Ovary (tissue), 10 donors: ENCODE measurements at regions of chr7 and their contacts with region 1.

Region 1: GRCh38 chr7:142063551-142064442 is 47.7 kb upstream of the MGAM2 start:
- DNase-seq: no peak
- H3K4me3 ChIP-seq: no peak overlapping the region
- H3K27ac ChIP-seq: no peak overlapping the region
- H3K4me1 ChIP-seq: no peaks in the 10 kb centered on the region
- H3K27me3 ChIP-seq: no peaks in the 10 kb centered on the region
- CTCF ChIP-seq: no peak
- EP300 ChIP-seq: no peak
- POLR2A ChIP-seq: no peak

Region 2: GRCh38 chr7:142088022-142088714 is 24.4 kb after region 1 on chr7:
- intact Hi-C with region 1: loop called in 1 of 4 experiments (anchors 1 kb)
- DNase-seq: no peak
- H3K4me3 ChIP-seq: no peak overlapping the region
- H3K27ac ChIP-seq: no peak overlapping the region
- H3K4me1 ChIP-seq: no peaks in the 10 kb centered on the region
- H3K27me3 ChIP-seq: no peaks in the 10 kb centered on the region
- CTCF ChIP-seq: no peak
- EP300 ChIP-seq: no peak
- POLR2A ChIP-seq: no peak

Region 3: DNA sequence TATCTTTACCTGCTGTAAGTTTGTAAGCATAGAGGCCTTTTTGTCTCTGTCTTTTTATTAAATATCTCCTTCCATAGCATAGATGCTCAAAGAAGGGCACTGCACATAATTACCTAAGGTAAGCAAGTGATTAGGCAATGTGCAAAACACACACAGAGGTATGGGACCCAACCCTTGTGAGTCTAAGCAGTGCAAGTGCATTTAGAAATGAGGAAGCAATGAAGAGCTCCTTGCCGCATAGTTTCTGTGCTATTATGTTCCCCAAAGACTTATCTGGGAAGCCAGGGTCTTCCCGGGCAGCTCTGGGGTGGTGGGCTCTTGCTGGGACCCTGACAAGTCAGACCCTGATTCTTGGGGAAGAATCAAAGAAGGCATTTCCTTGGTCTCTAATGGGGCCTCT is 34.2 kb after region 1 on chr7:
- intact Hi-C with region 1: loop called in 2 of 4 experiments (anchors 2 to 5 kb)
- DNase-seq: no peak
- H3K4me3 ChIP-seq: no peak overlapping the region
- H3K27ac ChIP-seq: no peak overlapping the region
- H3K4me1 ChIP-seq: no peaks in the 10 kb centered on the region
- H3K27me3 ChIP-seq: no peaks in the 10 kb centered on the region
- CTCF ChIP-seq: no peak
- EP300 ChIP-seq: no peak
- POLR2A ChIP-seq: no peak